A549 (cell line): ENCODE measurements at regions of chr6 and their contacts with region 1.

Region 1: DNA sequence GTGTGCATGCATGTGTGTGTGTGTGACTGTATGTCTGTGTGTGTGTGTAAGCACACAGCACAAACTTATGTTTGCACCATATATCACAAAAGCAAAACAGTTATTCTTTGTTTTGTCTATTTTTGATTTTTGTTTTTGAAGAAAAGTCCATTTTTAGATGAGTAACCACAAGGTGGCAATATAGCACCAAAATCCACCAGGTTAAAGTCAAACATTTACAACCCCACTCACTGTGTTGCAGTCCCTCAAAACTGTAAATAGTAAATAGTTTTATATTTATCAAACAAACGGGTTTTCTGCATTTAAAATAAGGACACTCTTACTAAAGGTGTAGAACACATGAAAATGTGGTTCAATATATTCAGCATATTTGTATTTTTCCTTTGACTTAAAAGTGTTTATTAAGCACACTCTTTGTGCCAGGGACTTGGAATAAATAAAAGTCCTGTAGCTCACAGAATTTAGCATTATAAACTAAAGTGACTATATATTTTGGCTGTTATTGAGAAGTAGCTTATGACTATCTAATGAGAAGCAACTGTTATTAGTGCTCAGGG is 118.5 kb downstream of the GFRAL start:
- DNase-seq: peak in 1 of 2 experiments; percentile 31
- ATAC-seq: no peak
- H3K4me3 ChIP-seq: no peak overlapping the region
- H3K27ac ChIP-seq: no peak overlapping the region
- H3K4me1 ChIP-seq: 0 out of 3 replicates have a peak, but pooled peaks cover 3% of the 10 kb centered on the region
- CTCF ChIP-seq: peak; percentile 81
- EP300 ChIP-seq: no peak
- POLR2A ChIP-seq: no peak
- RAD21 ChIP-seq: peak; percentile 84 to 87

Region 2: GRCh38 chr6:55423933-55424332 is 21.8 kb before region 1 on chr6:
- CTCF ChIA-PET with region 1: no interaction called
- POLR2A ChIA-PET with region 1: no interaction called
- DNase-seq: no peak
- ATAC-seq: no peak
- H3K4me3 ChIP-seq: no peak overlapping the region
- H3K27ac ChIP-seq: no peak overlapping the region
- H3K4me1 ChIP-seq: no peaks in the 10 kb centered on the region
- CTCF ChIP-seq: no peak
- EP300 ChIP-seq: no peak
- POLR2A ChIP-seq: no peak
- RAD21 ChIP-seq: no peak

Region 3: GRCh38 chr6:55528621-55529020 is 82.9 kb after region 1 on chr6:
- CTCF ChIA-PET with region 1: no interaction called
- POLR2A ChIA-PET with region 1: no interaction called
- DNase-seq: peak; percentile 2 to 67
- ATAC-seq: peak; percentile 73 to 76; a peak in 4 of 6 replicates
- H3K4me3 ChIP-seq: no peak overlapping the region
- H3K27ac ChIP-seq: no peak overlapping the region
- H3K4me1 ChIP-seq: no peaks in the 10 kb centered on the region
- CTCF ChIP-seq: no peak
- EP300 ChIP-seq: no peak
- POLR2A ChIP-seq: no peak
- RAD21 ChIP-seq: no peak

Region 4: GRCh38 chr6:55594442-55594841 is 148.7 kb after region 1 on chr6:
- CTCF ChIA-PET with region 1: no interaction called
- POLR2A ChIA-PET with region 1: no interaction called
- DNase-seq: no peak
- ATAC-seq: no peak
- H3K4me3 ChIP-seq: no peak overlapping the region
- H3K27ac ChIP-seq: no peak overlapping the region
- H3K4me1 ChIP-seq: no peaks in the 10 kb centered on the region
- CTCF ChIP-seq: no peak
- EP300 ChIP-seq: no peak
- POLR2A ChIP-seq: no peak
- RAD21 ChIP-seq: no peak

Region 5: DNA sequence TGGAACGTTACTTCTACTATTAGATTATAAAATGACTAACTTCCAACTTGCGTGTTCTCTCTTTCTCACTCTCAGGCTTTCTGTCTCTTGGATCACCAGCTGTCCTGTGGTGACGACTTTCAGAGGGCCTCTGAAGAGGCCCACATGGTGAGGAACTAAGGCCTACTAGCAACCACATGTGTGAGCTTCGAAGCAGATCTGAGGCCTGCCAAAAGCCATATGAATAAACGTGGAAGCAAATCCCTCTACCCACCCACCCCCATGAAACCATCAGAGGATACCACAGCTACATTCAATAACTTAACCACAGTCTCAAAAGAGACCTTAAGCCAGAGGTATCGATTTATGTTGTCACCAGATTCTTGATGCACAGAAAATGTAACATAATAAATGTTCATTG is 443.2 kb after region 1 on chr6:
- CTCF ChIA-PET with region 1: interaction called, 16 read pairs
- POLR2A ChIA-PET with region 1: no interaction called
- DNase-seq: no peak
- ATAC-seq: no peak
- H3K4me3 ChIP-seq: no peak overlapping the region
- H3K27ac ChIP-seq: no peak overlapping the region
- H3K4me1 ChIP-seq: peaks cover 15% of the 10 kb centered on the region
- CTCF ChIP-seq: no peak
- EP300 ChIP-seq: no peak
- POLR2A ChIP-seq: no peak
- RAD21 ChIP-seq: no peak

Region 6: GRCh38 chr6:55953335-55953734 is 507.6 kb after region 1 on chr6:
- CTCF ChIA-PET with region 1: interaction called, 50 read pairs
- POLR2A ChIA-PET with region 1: no interaction called
- DNase-seq: peak; percentile 10 to 51
- ATAC-seq: peak; percentile 73 to 76; a peak in 5 of 6 replicates
- H3K4me3 ChIP-seq: peak overlapping the region; percentile 41
- H3K27ac ChIP-seq: peak overlapping the region; percentile 51 to 52; a peak in 3 of 6 replicates
- H3K4me1 ChIP-seq: 0 out of 3 replicates have a peak, but pooled peaks cover 2% of the 10 kb centered on the region
- CTCF ChIP-seq: peak; percentile 66
- EP300 ChIP-seq: no peak
- POLR2A ChIP-seq: no peak
- RAD21 ChIP-seq: peak; percentile 76 to 83